Activated CD4-positive, alpha-beta T cell treated with anti-CD3 and anti-CD28 coated beads for 36 hours (primary cell): ENCODE measurements at regions of chr9 and their contacts with region 1.

Region 1: GRCh38 chr9:71819115-71819739 is 50.9 kb upstream of the CEMIP2 start:
- DNase-seq: peak; percentile 59
- ATAC-seq: no peak
- H3K4me3 Mint-ChIP-seq: no peak overlapping the region
- H3K27ac Mint-ChIP-seq: no peak overlapping the region
- H3K4me1 Mint-ChIP-seq: peaks cover 15% of the 10 kb centered on the region
- H3K27me3 Mint-ChIP-seq: no peaks in the 10 kb centered on the region

Region 2: GRCh38 chr9:71285191-71285656 is 534.0 kb before region 1 on chr9:
- CTCF ChIA-PET with region 1: interaction called, 4 read pairs
- POLR2A ChIA-PET with region 1: no interaction called
- intact Hi-C with region 1: loop called (anchors 1 to 5 kb)
- DNase-seq: peak; percentile 25
- ATAC-seq: peak; percentile 60
- H3K4me3 Mint-ChIP-seq: no peak overlapping the region
- H3K27ac Mint-ChIP-seq: no peak overlapping the region
- H3K4me1 Mint-ChIP-seq: no peaks in the 10 kb centered on the region
- H3K27me3 Mint-ChIP-seq: peaks cover 5% of the 10 kb centered on the region

Region 3: GRCh38 chr9:71783120-71783530 is 36.1 kb before region 1 on chr9:
- CTCF ChIA-PET with region 1: interaction called, 6 read pairs
- POLR2A ChIA-PET with region 1: no interaction called
- intact Hi-C with region 1: loop called in 1 of 2 experiments (anchors 2 kb)
- DNase-seq: peak; percentile 93
- ATAC-seq: peak; percentile 97
- H3K4me3 Mint-ChIP-seq: peak overlapping the region; percentile 68
- H3K27ac Mint-ChIP-seq: peak overlapping the region; percentile 98
- H3K4me1 Mint-ChIP-seq: peaks cover 48% of the 10 kb centered on the region
- H3K27me3 Mint-ChIP-seq: no peaks in the 10 kb centered on the region

Region 4: GRCh38 chr9:71806901-71807307 is 12.3 kb before region 1 on chr9:
- CTCF ChIA-PET with region 1: interaction called, 74 read pairs
- POLR2A ChIA-PET with region 1: interaction called, 3 read pairs
- intact Hi-C with region 1: no loop called
- DNase-seq: peak; percentile 74
- ATAC-seq: peak; percentile 97
- H3K4me3 Mint-ChIP-seq: no peak overlapping the region
- H3K27ac Mint-ChIP-seq: no peak overlapping the region
- H3K4me1 Mint-ChIP-seq: peaks cover 8% of the 10 kb centered on the region
- H3K27me3 Mint-ChIP-seq: no peaks in the 10 kb centered on the region

Region 5: DNA sequence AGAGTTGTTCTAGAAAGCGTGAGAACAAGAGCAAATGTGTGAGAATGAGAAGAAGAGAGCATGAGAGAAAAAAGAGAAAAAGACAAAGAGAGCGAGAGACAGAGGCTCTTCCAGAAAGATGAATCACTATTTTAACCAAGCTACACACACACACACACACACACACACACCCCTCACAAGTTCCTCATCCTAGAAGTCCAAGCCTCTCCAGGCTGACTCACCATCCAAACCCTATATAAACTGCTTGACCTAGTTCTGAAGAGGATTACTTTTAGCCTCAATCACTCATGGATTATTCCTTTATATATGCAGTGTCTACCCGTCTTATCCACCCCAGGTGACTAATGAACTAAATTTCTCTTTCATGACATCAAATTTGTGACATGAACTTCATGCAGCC is 203.6 kb after region 1 on chr9:
- CTCF ChIA-PET with region 1: interaction called, 32 read pairs
- POLR2A ChIA-PET with region 1: no interaction called
- intact Hi-C with region 1: no loop called
- DNase-seq: no peak
- ATAC-seq: no peak
- H3K4me3 Mint-ChIP-seq: no peak overlapping the region
- H3K27ac Mint-ChIP-seq: no peak overlapping the region
- H3K4me1 Mint-ChIP-seq: no peaks in the 10 kb centered on the region
- H3K27me3 Mint-ChIP-seq: no peaks in the 10 kb centered on the region

Region 6: GRCh38 chr9:72089451-72090130 is 270.4 kb after region 1 on chr9:
- CTCF ChIA-PET with region 1: no interaction called
- POLR2A ChIA-PET with region 1: no interaction called
- intact Hi-C with region 1: no loop called
- DNase-seq: no peak
- ATAC-seq: no peak
- H3K4me3 Mint-ChIP-seq: no peak overlapping the region
- H3K27ac Mint-ChIP-seq: no peak overlapping the region
- H3K4me1 Mint-ChIP-seq: no peaks in the 10 kb centered on the region
- H3K27me3 Mint-ChIP-seq: peaks cover 2% of the 10 kb centered on the region

Region 7: DNA sequence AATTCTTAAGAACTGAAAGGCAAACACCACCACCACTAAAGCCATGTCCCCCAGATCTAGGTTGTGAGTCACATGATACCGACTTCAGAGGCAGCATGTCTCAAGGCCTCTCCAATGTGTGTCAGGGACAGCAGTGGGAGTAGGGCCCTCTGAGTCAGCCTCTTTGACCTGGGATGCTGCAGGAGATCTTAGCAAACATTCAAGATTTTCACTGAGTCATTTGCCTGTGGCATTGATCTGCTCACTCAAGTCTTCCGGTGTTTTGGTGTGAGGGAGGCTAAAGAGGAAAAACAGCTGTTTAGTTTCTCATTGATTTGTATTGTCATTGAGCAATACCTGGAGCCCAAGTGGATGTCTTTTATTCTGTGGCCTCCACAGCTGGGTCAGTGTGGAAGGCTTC is 738.3 kb after region 1 on chr9:
- CTCF ChIA-PET with region 1: no interaction called
- POLR2A ChIA-PET with region 1: no interaction called
- intact Hi-C with region 1: no loop called
- DNase-seq: peak; percentile 70
- ATAC-seq: peak; percentile 99
- H3K4me3 Mint-ChIP-seq: no peak overlapping the region
- H3K27ac Mint-ChIP-seq: peak overlapping the region; percentile 6
- H3K4me1 Mint-ChIP-seq: peaks cover 11% of the 10 kb centered on the region
- H3K27me3 Mint-ChIP-seq: no peaks in the 10 kb centered on the region